ENCODE measurements at regions of chr1 and their contacts with region 1.

Region 1: GRCh38 chr1:67760030-67760821 is 73.0 kb downstream of the GNG12 start:
- DNase-seq: no peak

Region 2: DNA sequence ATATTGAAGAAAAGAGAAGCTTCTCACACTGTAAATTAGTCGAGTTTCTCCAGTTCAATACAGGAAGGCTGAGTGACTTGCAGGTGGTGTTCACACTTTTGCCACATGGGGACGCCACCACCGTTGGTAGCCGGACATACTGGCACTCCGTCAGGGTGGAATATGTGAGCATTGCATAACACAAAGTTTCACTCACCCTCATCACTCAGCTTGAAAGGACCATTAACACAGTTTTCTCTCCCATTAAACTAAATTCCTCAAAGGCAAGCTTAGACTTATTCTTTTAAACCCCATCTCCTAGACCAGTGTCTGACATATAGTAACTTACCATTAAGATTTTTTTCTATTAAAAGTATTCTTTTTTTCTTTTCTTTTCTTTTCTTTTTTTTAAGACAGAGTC is 224.8 kb before region 1 on chr1:
- intact Hi-C with region 1: loop called (anchors 2 kb)
- DNase-seq: peak; percentile 84

Region 3: DNA sequence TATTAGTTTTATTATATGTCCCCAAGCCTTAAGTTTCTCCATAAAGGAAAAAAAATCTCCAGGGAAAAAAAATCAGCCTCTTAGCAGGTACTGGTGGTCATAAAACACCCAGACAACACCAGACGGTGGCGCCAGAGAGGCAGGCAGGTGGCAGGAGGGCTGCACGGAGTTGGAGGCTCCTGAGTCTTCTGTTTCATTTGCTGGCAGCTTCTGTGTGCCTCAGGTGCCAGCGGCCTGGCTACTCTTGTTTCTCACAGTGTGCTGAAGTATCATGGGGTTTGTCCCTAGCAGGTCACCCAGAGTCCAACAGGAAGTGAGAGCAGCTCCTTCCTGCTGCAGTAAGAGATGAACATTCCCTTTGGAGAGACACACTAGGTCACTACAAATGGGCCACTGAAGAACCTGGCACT is 198.5 kb before region 1 on chr1:
- intact Hi-C with region 1: loop called (anchors 2 kb)
- DNase-seq: peak; percentile 94

Region 4: GRCh38 chr1:68010090-68010489 is 249.9 kb after region 1 on chr1:
- intact Hi-C with region 1: loop called (anchors 10 kb)
- DNase-seq: no peak